ENCODE measurements at regions of chr17 and their contacts with region 1.

Region 1: DNA sequence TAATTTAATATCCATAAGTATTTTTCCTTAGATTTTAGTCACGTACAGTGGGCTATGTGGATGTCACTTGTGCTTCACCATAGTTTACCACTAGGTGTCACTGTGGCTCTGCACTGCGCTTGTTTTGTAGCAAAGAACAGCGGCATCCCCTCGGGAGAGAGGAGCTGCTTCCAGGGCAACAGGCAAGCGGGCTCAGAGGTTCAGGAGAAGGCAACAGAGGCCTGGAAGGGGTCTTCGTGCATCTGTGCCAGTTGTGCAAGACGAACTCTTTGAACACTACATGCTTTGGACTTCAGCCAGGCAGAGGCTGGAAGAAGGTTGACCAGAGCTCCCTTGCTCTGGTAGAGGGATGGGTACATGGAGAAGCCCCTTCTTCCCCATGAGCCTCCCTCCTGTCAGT is 20.6 kb downstream of the CYB561 start:
- DNase-seq: peak in 1 of 2 experiments; percentile 81
- H3K4me3 ChIP-seq: no peak overlapping the region
- H3K27ac ChIP-seq: no peak overlapping the region
- H3K4me1 ChIP-seq: peaks cover 2 to 8% (median 4%) of the 10 kb centered on the region in 4 experiments; a peak in 6 of 7 replicates
- H3K27me3 ChIP-seq: no peaks in the 10 kb centered on the region
- CTCF ChIP-seq: peak; percentile 60 to 91 (median 86)
- EP300 ChIP-seq: no peak
- POLR2A ChIP-seq: no peak
- RAD21 ChIP-seq: peak; percentile 98 to 99

Region 2: DNA sequence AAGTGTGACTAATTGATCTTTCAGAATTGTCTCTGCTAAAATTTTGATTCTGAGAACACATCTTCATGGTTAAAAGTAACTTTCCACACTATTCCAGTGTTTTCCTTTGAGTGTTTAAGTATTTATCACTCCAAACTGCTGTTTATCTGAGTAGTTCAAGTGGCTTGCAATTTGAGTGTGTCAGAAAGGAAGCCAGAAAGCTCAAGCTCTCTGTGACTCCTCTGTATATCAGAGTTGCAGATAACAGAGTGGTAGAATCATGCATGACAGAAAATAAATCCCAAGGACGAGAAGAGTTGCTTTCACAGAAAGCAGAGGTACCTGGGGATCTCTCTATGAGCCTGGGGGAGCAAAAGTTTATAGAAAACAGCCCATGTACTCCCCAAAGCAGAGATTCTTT is 109.4 kb before region 1 on chr17:
- CTCF ChIA-PET with region 1: no interaction called
- POLR2A ChIA-PET with region 1: no interaction called
- DNase-seq: no peak
- H3K4me3 ChIP-seq: no peak overlapping the region
- H3K27ac ChIP-seq: no peak overlapping the region
- H3K4me1 ChIP-seq: no peaks in the 10 kb centered on the region
- H3K27me3 ChIP-seq: no peaks in the 10 kb centered on the region
- CTCF ChIP-seq: no peak
- EP300 ChIP-seq: no peak
- POLR2A ChIP-seq: no peak
- RAD21 ChIP-seq: no peak

Region 3: DNA sequence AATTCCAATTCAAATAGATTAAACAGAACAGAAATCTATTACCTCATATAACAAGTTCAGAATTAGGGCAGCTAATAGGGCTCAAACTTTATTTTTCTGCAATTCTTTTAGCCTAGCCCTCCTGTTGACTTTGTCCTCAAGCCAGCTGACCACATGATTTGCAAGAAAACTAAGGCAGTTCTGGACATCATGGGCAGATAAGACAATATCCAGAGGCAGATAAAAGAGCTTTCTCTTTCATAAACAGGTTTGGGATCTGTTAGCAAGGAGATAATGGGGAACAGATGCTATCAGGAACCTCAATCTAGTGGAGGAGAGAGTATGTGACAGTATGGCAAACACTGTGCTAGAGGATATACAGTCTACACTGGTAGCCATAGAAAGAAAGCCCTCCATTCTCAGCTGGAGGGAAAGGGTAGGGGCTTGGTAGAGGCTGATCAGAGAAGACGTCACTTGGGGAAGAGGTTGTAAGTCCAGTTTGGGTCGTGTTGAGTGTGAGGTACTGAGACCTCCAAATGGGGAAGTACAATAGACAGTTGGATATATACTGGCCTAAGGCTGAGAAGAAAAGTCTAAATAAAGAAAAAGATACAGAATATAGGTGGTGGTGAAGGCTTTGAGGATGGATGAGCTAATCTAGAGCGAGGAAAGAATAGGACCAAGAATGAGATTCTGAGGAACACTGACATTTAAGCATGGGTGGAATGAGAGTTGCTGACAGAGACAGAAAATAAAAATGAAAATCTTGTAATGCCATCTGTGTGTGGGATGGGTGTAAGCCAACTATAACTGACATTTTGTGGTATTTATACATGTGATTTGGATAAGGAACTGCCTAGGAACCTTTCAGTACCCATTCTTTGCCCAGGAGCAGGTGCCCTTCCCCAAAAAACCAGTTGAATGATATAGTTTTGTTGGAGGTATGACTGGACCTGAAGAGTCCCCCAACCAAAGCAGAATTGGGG is 46.8 kb before region 1 on chr17:
- CTCF ChIA-PET with region 1: no interaction called
- POLR2A ChIA-PET with region 1: no interaction called
- DNase-seq: no peak
- H3K4me3 ChIP-seq: no peak overlapping the region
- H3K27ac ChIP-seq: no peak overlapping the region
- H3K4me1 ChIP-seq: no peaks in the 10 kb centered on the region
- H3K27me3 ChIP-seq: no peaks in the 10 kb centered on the region
- CTCF ChIP-seq: no peak
- EP300 ChIP-seq: no peak
- POLR2A ChIP-seq: no peak
- RAD21 ChIP-seq: no peak

Region 4: GRCh38 chr17:63413128-63413527 is 12.4 kb before region 1 on chr17:
- CTCF ChIA-PET with region 1: interaction called, 27 read pairs
- POLR2A ChIA-PET with region 1: no interaction called
- DNase-seq: no peak
- H3K4me3 ChIP-seq: no peak overlapping the region
- H3K27ac ChIP-seq: no peak overlapping the region
- H3K4me1 ChIP-seq: no peaks in the 10 kb centered on the region
- H3K27me3 ChIP-seq: no peaks in the 10 kb centered on the region
- CTCF ChIP-seq: no peak
- EP300 ChIP-seq: no peak
- POLR2A ChIP-seq: no peak
- RAD21 ChIP-seq: no peak; a peak in 1 of 4 replicates

Region 5: DNA sequence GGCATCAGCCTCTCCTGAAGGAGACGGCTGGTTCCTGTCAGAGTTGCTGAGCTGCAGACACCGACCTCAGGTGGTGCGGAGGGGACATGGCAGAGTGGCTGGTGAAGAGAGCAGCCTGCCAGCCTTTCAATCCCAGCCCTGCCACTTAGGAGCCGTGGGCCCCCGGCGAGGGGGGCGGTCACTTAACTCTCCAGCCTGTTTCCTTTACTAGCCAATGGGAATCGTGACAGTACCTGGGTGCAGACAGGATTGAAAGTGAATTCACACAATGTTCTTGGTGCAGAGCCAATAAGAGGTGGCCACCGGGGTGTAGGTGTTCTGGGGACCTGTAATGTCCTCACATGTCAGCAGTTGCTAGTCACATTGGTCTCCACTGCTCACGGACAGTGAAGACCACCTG is 64.8 kb after region 1 on chr17:
- CTCF ChIA-PET with region 1: interaction called, 15 read pairs
- POLR2A ChIA-PET with region 1: no interaction called
- DNase-seq: no peak
- H3K4me3 ChIP-seq: no peak overlapping the region
- H3K27ac ChIP-seq: no peak overlapping the region
- H3K4me1 ChIP-seq: peaks cover 0 to 3% (median 0%) of the 10 kb centered on the region in 4 experiments; a peak in 1 of 7 replicates
- H3K27me3 ChIP-seq: peaks cover 0 to 4% (median 0%) of the 10 kb centered on the region in 4 experiments; a peak in 1 of 7 replicates
- CTCF ChIP-seq: peak; percentile 8 to 44 (median 41); a peak in 3 of 4 replicates
- EP300 ChIP-seq: no peak
- POLR2A ChIP-seq: no peak
- RAD21 ChIP-seq: peak; percentile 30 to 33

Region 6: DNA sequence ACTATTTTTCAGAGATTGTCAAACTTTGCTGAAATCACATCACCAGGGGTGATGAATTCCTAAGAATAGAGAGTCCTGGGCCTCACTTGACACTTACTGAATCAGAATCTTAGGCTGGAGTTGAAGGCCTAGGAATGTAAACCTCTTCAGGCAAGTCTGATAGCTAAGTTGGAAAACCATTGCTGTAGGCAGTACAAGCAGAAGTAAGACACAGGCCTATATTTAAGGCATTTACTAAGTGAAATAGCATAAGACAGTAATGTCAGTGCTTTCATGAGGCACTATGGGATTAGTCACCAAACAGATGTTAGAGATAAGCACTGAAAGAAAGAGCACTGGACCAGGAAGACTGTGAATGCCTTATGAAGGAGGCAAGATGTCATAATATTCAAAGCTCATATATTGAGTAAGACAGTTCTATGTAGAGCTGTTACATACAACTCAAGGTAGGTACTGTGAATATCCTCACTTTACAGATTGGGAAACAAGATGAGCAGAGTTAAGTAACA is 146.3 kb after region 1 on chr17:
- CTCF ChIA-PET with region 1: interaction called, 27 read pairs
- POLR2A ChIA-PET with region 1: no interaction called
- DNase-seq: no peak
- H3K4me3 ChIP-seq: no peak overlapping the region
- H3K27ac ChIP-seq: no peak overlapping the region
- H3K4me1 ChIP-seq: no peaks in the 10 kb centered on the region; a peak in 1 of 7 replicates
- H3K27me3 ChIP-seq: no peaks in the 10 kb centered on the region
- CTCF ChIP-seq: no peak
- EP300 ChIP-seq: no peak
- POLR2A ChIP-seq: no peak
- RAD21 ChIP-seq: no peak

Region 7: DNA sequence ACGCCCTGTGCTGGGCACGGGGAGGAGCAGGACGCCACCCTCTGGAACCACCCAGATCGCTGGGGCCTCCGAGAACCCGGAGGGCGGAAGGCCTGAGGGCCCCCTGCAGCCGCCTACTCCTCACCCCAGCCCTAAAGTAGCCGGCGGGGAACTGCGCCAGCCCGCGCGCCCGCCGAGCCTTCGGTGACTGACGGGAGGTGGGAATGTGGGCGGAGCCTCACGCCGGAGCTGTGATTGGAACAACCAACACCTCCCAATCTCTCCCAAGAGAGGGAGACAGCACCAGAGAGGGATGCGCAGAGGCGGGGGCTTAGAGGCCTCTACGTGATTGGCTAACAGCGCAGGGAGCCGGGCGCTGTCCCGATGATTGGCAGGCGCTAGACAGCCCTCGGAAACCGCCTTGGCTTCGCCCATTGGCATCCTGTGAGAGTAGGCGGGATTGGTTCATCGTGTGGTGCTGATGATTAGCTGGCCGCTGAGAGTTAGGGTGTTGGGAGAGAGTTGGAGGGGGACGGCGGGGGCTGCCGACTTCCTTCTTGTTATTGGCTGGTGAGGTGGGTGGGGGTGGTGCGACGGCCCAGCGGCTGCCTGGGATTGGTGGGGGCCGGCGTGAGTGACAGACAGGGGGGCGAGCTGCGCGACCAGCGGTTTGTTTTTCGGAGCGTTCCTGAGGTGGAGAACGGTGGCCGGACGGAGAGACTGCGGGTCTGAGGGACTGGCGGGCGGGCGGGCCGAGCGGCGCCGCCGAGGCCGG is 196.5 kb after region 1 on chr17 and contains the start of gene MAP3K3:
- CTCF ChIA-PET with region 1: interaction called, 14 read pairs
- POLR2A ChIA-PET with region 1: interaction called, 3 read pairs
- DNase-seq: peak; percentile 97 to 99
- H3K4me3 ChIP-seq: peak within 1 kb of the TSS; percentile 64 to 82 (median 72)
- H3K27ac ChIP-seq: peak within 1 kb of the TSS; percentile 41; the same call in 1 of the 2 replicates
- H3K4me1 ChIP-seq: peaks cover 2 to 5% (median 3%) of the 10 kb centered on the region in 4 experiments; a peak in 3 of 7 replicates
- H3K27me3 ChIP-seq: no peaks in the 10 kb centered on the region
- CTCF ChIP-seq: no peak
- EP300 ChIP-seq: no peak
- POLR2A ChIP-seq: peak; percentile 58 to 95
- RAD21 ChIP-seq: peak; percentile 0 to 2; a peak in 2 of 4 replicates
- total RNA-seq, gene MAP3K3: 21.0 and 22.6 TPM in 2 replicates

Measured in H1 (cell line).